Cardiac septum (tissue), 1 donor: ENCODE measurements at regions of chr14 and their contacts with region 1.

Region 1: DNA sequence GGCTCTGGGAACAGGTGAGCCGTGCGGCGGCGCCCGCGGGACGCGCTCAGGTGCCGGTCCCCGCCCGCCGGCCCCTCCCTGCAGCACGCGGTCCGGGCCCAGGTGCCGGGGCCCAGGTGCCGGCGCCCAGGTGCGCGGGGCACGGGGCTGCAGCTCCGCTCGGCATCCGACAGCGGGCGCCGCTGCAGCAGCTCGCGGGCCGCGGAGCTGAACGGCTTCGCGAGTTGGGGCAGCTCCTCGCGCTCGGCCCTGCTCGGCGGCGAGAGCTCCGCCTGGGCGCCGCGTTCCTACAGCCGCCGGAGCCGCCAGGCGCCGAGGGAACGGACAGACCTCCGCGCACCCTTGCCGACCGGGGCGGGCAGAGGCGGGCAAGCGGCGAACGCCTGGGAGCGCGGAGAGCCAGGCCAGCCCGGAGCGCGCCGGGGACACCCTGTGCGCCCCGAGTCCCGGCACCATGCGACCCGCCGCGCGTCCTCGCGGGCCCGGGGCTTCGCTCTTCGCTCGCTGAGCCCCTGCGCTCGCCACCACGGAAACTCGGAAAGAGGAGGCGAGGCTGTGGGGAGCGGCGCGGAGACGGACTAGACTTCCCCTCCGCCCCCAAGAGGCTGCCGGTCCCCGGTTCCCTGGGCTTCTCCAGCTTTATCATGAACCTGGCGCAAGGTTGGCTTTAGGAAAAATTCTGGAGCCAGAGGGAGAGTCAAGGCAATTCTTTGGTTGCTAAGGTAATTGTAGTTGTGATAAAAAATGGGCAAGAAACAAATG is at the start of gene RGS6:
- DNase-seq: no peak
- total RNA-seq, gene RGS6: 22.4 TPM

Region 2: GRCh38 chr14:71452539-71452938 is 479.9 kb before region 1 on chr14:
- intact Hi-C with region 1: no loop called
- DNase-seq: no peak

Region 3: DNA sequence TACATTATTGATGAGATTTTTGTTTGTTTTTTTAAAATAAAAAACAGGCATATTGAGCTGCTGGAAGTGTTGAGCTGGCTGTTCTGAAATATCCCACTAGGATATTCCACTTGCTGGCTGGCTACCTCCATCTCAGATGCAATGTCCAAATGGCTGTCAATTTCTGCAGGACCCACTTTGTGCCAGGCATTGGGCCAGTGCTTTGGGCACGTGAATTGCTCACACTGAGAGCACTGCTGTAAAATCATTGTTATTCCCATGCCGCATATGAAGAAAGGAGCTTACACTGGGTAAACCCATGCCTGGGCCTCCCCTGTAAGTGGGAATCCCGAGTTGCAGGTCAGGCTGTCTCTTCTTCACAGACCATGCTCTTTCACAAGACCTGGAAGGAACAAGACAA is 56.5 kb after region 1 on chr14:
- intact Hi-C with region 1: loop called (anchors 5 kb)
- DNase-seq: no peak

Region 4: GRCh38 chr14:72291908-72292688 is 359.7 kb after region 1 on chr14:
- intact Hi-C with region 1: loop called (anchors 1 kb)
- DNase-seq: no peak

Region 5: GRCh38 chr14:72420725-72421474 is 488.5 kb after region 1 on chr14:
- intact Hi-C with region 1: loop called (anchors 5 kb)
- DNase-seq: peak; percentile 83